Endothelial cell of umbilical vein (primary cell): ENCODE measurements at regions of chr3 and their contacts with region 1.

Region 1: GRCh38 chr3:5057857-5058324 is 64.2 kb upstream of the ARL8B start:
- DNase-seq: peak; percentile 85
- H3K4me3 ChIP-seq: no peak overlapping the region
- H3K27ac ChIP-seq: no peak overlapping the region
- H3K4me1 ChIP-seq: no peaks in the 10 kb centered on the region
- H3K27me3 ChIP-seq: peaks cover 0 to 2% of the 10 kb centered on the region in 2 experiments
- CTCF ChIP-seq: peak; percentile 59 to 65
- POLR2A ChIP-seq: no peak

Region 2: GRCh38 chr3:4986782-4987537 is 70.9 kb before region 1 on chr3:
- CTCF ChIA-PET with region 1: interaction called, 12 read pairs
- POLR2A ChIA-PET with region 1: no interaction called
- dilution Hi-C with region 1: no loop called
- intact Hi-C with region 1: no loop called
- DNase-seq: peak; percentile 97
- H3K4me3 ChIP-seq: peak overlapping the region in 2 of 3 experiments; percentile 1 to 25
- H3K27ac ChIP-seq: peak overlapping the region; percentile 100
- H3K4me1 ChIP-seq: peaks cover 56% of the 10 kb centered on the region
- H3K27me3 ChIP-seq: no peaks in the 10 kb centered on the region
- CTCF ChIP-seq: no peak
- POLR2A ChIP-seq: no peak